RWPE1 (cell line): ENCODE measurements at regions of chr9 and their contacts with region 1.

Region 1: GRCh38 chr9:111597817-111598729 is 1.4 kb downstream of the PTGR1 start:
- DNase-seq: peak; percentile 79
- H3K27ac ChIP-seq: peak overlapping the region; percentile 87
- CTCF ChIP-seq: peak; percentile 99

Region 2: DNA sequence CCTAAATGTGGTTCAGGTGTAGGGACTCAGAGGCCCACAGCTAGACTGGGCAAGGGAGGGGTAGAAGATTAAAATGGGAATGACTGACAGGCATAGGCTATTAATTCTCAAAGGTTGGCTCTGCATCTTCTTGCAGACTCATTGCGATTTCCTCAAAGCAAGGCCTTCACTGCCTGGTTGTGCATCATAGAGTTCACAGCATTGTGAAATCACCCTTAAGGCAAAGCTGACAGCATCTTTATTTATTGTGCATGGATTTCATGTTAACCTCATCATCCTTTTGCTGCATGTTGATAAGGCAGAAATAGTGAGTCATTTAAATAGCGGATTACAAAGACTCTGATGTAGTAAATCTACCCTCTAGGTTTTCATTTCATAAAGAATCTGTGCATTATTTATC is 1831.7 kb before region 1 on chr9:
- CTCF ChIA-PET with region 1: no interaction called
- POLR2A ChIA-PET with region 1: no interaction called
- DNase-seq: peak; percentile 91
- H3K27ac ChIP-seq: peak overlapping the region; percentile 63
- CTCF ChIP-seq: no peak

Region 3: GRCh38 chr9:111559000-111559610 is 39.0 kb before region 1 on chr9:
- CTCF ChIA-PET with region 1: no interaction called
- POLR2A ChIA-PET with region 1: no interaction called
- DNase-seq: peak; percentile 40
- H3K27ac ChIP-seq: no peak overlapping the region
- CTCF ChIP-seq: no peak

Region 4: DNA sequence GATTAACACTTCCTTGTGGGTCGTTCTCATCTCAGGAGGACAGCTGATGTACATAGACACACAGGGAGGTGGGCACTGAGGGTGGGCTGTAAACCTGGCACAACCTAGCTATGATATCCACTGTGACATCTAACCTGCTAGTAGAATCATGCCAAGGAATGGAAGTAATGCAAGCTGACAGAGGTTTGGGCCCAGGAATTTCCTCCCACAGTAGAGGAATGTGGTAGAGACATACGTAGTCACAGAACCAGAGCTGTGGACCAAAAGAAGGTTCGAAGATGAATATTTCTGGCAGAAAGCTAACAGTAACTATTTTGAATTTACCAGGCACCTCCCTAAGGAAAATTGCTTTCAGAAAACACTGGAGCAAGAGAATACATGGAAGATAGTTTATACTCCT is 17.9 kb after region 1 on chr9:
- CTCF ChIA-PET with region 1: interaction called, 24 read pairs
- POLR2A ChIA-PET with region 1: no interaction called
- DNase-seq: no peak
- H3K27ac ChIP-seq: no peak overlapping the region
- CTCF ChIP-seq: no peak

Region 5: GRCh38 chr9:111621895-111622480 is 23.9 kb after region 1 on chr9:
- CTCF ChIA-PET with region 1: interaction called, 24 read pairs
- POLR2A ChIA-PET with region 1: interaction called, 7 read pairs
- DNase-seq: peak; percentile 56
- H3K27ac ChIP-seq: peak overlapping the region; percentile 58
- CTCF ChIP-seq: peak; percentile 78